SK-N-SH (cell line): ENCODE measurements at regions of chr5 and their contacts with region 1.

Region 1: GRCh38 chr5:38441453-38442246 is 114.8 kb downstream of the LIFR start:
- DNase-seq: peak; percentile 86
- H3K4me3 ChIP-seq: no peak overlapping the region; a peak in 1 of 4 replicates
- H3K27ac ChIP-seq: no peak overlapping the region
- H3K4me1 ChIP-seq: no peaks in the 10 kb centered on the region
- H3K27me3 ChIP-seq: no peaks in the 10 kb centered on the region
- CTCF ChIP-seq: peak; percentile 97
- EP300 ChIP-seq: no peak
- RAD21 ChIP-seq: peak; percentile 99

Region 2: GRCh38 chr5:38208782-38209378 is 232.8 kb before region 1 on chr5:
- CTCF ChIA-PET with region 1: interaction called, 36 read pairs
- POLR2A ChIA-PET with region 1: no interaction called
- DNase-seq: peak; percentile 51
- H3K4me3 ChIP-seq: no peak overlapping the region
- H3K27ac ChIP-seq: no peak overlapping the region
- H3K4me1 ChIP-seq: peaks cover 0 to 6% of the 10 kb centered on the region in 2 experiments; a peak in 2 of 4 replicates
- H3K27me3 ChIP-seq: no peaks in the 10 kb centered on the region
- CTCF ChIP-seq: peak; percentile 58
- EP300 ChIP-seq: no peak
- RAD21 ChIP-seq: peak; percentile 84

Region 3: GRCh38 chr5:38396766-38397165 is 44.9 kb before region 1 on chr5:
- CTCF ChIA-PET with region 1: no interaction called
- POLR2A ChIA-PET with region 1: no interaction called
- DNase-seq: no peak
- H3K4me3 ChIP-seq: no peak overlapping the region
- H3K27ac ChIP-seq: no peak overlapping the region
- H3K4me1 ChIP-seq: no peaks in the 10 kb centered on the region; a peak in 1 of 4 replicates
- H3K27me3 ChIP-seq: no peaks in the 10 kb centered on the region; the same call in 1 of the 2 replicates
- CTCF ChIP-seq: no peak
- EP300 ChIP-seq: no peak
- RAD21 ChIP-seq: no peak

Region 4: DNA sequence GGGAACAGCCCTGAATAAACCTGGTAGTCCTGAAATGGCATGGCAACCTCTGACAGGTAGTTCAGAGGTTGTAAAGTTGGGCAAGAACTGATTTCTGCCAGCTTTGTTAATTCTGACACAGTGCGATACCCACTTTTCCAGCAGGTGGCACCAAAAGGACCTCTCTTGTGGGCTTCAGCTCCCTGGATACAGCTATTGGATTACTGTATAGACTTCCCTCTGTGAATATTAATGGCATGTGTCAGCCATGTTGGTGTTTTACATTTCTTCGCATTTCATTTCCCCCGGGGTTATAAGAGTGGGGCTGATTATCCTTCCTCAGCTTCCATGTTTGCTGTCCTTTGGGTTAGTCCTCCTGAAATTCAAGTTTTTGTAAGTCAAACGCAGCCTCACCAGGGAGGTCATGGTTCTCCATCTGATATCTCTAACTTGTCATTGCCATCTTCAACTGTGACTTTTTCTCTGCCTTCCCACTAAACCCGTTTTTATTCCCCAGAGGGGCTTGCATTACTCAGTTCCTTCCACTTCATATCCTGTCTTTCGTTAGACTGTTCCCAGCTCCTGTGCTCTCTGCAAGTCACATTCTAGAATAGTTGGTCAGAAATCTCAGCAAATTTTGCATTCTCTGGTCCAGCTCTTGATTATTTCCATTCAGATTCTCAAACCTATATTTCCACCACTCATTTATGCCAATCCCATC is 20.8 kb before region 1 on chr5:
- CTCF ChIA-PET with region 1: interaction called, 104 read pairs
- POLR2A ChIA-PET with region 1: no interaction called
- DNase-seq: peak; percentile 67
- H3K4me3 ChIP-seq: no peak overlapping the region
- H3K27ac ChIP-seq: no peak overlapping the region
- H3K4me1 ChIP-seq: peaks cover 3 to 7% of the 10 kb centered on the region in 2 experiments; a peak in 1 of 4 replicates
- H3K27me3 ChIP-seq: no peaks in the 10 kb centered on the region
- CTCF ChIP-seq: peak; percentile 86
- EP300 ChIP-seq: no peak
- RAD21 ChIP-seq: peak; percentile 79

Region 5: GRCh38 chr5:38463634-38464521 is 22.2 kb after region 1 on chr5:
- CTCF ChIA-PET with region 1: interaction called, 24 read pairs
- POLR2A ChIA-PET with region 1: no interaction called
- DNase-seq: no peak
- H3K4me3 ChIP-seq: peak overlapping the region in 1 of 2 experiments; percentile 6; a peak in 1 of 4 replicates
- H3K27ac ChIP-seq: peak overlapping the region; percentile 67 to 92
- H3K4me1 ChIP-seq: peaks cover 13 to 43% of the 10 kb centered on the region in 2 experiments; a peak in 3 of 4 replicates
- H3K27me3 ChIP-seq: no peaks in the 10 kb centered on the region
- CTCF ChIP-seq: no peak
- EP300 ChIP-seq: peak; percentile 62 to 92
- RAD21 ChIP-seq: no peak

Region 6: DNA sequence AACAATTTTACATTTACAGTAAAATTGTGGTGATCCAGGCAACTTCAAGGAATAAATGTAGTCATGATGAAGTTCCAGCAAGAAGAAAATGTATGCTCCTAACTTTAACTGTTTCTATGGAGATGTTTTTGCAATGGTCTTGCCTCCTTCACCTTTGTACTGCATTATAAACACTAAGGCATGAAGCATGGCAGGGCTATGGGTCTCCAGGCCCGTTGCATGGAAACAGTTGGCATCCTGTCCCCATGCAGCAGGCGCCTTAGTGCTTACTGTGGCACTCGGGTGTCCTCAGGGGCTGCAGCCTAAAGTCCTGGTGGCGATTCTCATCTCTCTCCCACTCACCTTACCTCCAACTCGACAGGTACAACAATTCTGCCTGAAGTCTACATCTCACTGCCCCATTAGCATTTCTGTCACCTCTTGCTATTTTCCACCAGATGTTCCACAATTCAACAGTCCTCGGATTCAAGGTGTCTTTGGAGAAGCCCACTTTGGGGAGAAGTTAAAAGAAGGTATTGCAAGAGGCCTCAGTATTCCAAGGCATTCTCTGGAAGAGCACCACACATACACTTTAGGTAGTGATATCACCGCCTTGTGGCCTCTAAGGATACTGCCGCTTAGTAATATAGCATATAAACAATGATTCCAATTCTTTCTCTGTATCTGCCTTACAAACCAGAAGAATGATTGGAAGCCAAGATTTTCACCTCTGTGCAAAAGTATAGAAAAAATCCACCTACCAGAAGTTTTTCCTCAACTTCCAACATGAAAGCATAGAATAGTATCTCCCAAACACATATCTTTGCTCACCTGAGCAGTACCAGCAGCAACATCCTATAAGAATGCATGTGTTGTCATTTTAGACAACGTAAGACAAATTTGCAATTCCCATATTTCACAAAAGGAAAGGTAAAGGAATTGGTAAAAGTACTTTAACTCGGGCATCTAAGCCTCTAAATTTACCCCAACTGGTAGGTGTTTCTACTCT is 109.7 kb after region 1 on chr5:
- CTCF ChIA-PET with region 1: interaction called, 41 read pairs
- POLR2A ChIA-PET with region 1: no interaction called
- DNase-seq: peak; percentile 52
- H3K4me3 ChIP-seq: peak overlapping the region in 1 of 2 experiments; percentile 6; a peak in 1 of 4 replicates
- H3K27ac ChIP-seq: no peak overlapping the region
- H3K4me1 ChIP-seq: peaks cover 0 to 14% of the 10 kb centered on the region in 2 experiments; a peak in 3 of 4 replicates
- H3K27me3 ChIP-seq: no peaks in the 10 kb centered on the region
- CTCF ChIP-seq: peak; percentile 72
- EP300 ChIP-seq: no peak
- RAD21 ChIP-seq: peak; percentile 66

Region 7: DNA sequence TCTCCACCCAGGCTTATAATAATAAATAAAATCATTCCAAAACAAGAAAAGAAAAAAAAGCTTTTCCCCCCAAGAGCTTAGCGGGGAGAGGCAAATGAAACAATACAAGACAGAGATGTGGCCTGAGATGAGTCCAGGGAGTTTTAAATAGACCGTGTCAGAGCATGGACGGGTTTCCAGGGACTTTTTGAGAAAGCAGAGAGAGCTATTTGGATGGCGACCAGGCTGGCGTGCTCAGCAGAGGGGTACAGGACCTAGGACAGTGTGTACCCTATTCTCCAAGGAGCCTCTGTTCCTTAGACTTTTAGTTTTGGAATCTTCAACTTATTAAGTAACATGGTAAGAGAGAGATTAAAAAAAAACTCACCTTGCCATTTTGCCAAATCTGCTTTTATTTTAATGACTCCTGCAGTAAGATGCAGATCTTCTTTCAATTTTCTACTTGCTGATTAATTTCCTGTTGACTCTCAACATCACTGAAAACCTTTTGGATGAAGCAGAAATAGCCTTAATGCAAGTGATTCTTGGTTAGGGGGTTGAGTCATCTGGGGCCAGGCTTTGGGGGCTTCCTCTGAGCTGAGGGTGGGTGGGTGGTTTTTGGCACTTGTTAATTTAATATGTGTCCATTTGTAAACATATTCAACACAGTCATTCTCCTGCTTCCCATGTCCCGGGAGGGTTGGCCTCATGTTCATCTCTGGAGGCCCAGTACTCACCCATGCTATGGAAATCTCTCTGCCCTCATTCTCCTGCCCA is 354.5 kb after region 1 on chr5:
- CTCF ChIA-PET with region 1: interaction called, 19 read pairs
- POLR2A ChIA-PET with region 1: no interaction called
- DNase-seq: no peak
- H3K4me3 ChIP-seq: no peak overlapping the region
- H3K27ac ChIP-seq: peak overlapping the region in 1 of 2 experiments; percentile 20; a peak in 1 of 4 replicates
- H3K4me1 ChIP-seq: no peaks in the 10 kb centered on the region; a peak in 1 of 4 replicates
- H3K27me3 ChIP-seq: no peaks in the 10 kb centered on the region
- CTCF ChIP-seq: no peak
- EP300 ChIP-seq: no peak
- RAD21 ChIP-seq: no peak

Region 8: DNA sequence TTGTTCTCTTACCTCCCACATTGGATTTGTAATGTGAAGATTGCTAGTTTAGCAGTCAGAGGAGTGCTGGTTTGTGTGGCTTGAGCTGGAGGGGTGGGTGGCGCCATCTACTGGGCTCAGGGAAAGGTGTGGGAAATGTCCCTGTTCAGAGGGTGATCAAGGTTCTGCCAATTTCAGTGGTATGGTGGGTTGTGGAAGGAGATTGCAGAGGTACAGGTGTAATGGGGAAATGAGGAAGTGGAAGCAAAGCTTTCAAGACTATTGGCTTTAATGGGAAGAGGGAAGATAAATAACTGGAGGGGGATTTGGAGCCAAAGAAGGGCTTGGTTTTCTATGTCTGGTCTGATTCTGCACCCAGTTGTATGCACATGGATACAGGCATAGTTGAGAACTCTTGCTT is 480.5 kb after region 1 on chr5:
- CTCF ChIA-PET with region 1: interaction called, 34 read pairs
- POLR2A ChIA-PET with region 1: no interaction called
- DNase-seq: peak; percentile 64
- H3K4me3 ChIP-seq: no peak overlapping the region; a peak in 1 of 4 replicates
- H3K27ac ChIP-seq: no peak overlapping the region
- H3K4me1 ChIP-seq: peaks cover 0 to 23% of the 10 kb centered on the region in 2 experiments; a peak in 2 of 4 replicates
- H3K27me3 ChIP-seq: no peaks in the 10 kb centered on the region
- CTCF ChIP-seq: peak; percentile 88
- EP300 ChIP-seq: no peak
- RAD21 ChIP-seq: peak; percentile 73